ENCODE measurements at regions of chr9 and their contacts with region 1.

Region 1: GRCh38 chr9:87324613-87325194 is 173.0 kb upstream of the DAPK1 start:
- DNase-seq: no peak
- ATAC-seq: peak; percentile 70 to 79
- H3K4me3 ChIP-seq: no peak overlapping the region
- H3K27ac ChIP-seq: no peak overlapping the region
- H3K4me1 ChIP-seq: no peaks in the 10 kb centered on the region
- H3K27me3 ChIP-seq: no peaks in the 10 kb centered on the region
- CTCF ChIP-seq: peak; percentile 70 to 84 (median 78)
- POLR2A ChIP-seq: no peak

Region 2: DNA sequence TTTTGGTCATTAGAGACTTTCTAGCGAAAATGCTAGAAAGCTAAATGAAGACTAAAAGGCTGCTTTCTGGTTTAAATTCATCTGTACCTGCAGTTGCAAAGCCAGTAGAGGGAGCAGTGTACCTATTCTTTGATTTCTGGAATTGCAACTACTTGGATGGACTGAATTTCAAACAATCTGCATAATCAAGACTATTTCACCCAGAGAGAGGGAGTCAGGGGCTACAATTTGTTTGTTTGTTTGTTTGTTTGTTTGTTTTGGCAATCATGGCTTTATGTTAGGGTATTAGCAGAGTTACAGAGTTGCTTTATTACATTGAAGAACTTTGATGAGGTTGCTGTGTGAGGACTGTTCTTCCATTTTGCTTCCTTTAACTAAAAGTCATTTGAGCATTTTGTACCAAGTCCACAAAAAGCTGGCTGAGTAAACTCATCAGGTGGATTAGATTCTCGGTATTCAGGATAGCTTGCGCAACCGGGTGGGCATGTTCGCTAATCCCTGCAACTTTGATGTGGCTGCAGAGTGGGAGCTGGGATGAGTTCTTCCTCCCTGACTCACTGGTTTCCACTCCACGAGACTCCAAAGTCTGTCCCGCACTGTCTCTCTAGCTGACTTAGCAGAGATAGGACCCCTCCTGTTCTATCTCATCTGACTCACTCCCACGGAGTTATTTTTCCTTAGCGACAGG is 890.5 kb before region 1 on chr9:
- in situ Hi-C with region 1: loop called in 1 of 4 experiments (anchors 5 kb)
- intact Hi-C with region 1: loop called (anchors 2 kb)
- DNase-seq: peak; percentile 32 to 43
- ATAC-seq: peak; percentile 64 to 69
- H3K4me3 ChIP-seq: no peak overlapping the region
- H3K27ac ChIP-seq: peak overlapping the region in 2 of 4 donors; percentile 28 to 34
- H3K4me1 ChIP-seq: no peaks in the 10 kb centered on the region
- H3K27me3 ChIP-seq: no peaks in the 10 kb centered on the region
- CTCF ChIP-seq: peak; percentile 19 to 67 (median 56)
- POLR2A ChIP-seq: no peak

Region 3: DNA sequence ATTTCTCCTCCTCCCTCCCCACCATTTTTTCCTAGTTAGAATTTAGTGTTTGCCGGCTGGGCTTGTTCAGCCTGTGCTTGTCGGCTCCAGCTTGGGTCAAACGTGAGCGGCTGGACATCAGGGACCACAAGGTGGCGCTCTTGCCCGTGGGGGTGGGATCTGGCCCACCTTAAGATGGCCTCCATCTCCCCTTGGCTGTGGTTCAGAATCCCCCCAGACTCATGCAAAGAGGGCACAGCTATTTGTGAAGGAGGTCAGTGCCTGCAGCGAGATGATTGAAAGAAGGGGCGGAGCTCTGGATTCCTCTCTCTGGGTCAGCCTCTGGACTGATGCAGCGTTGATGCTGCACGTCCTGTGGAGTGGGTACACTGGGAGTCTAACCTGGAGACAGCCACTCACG is 687.2 kb before region 1 on chr9:
- in situ Hi-C with region 1: loop called in 1 of 4 experiments (anchors 25 kb)
- intact Hi-C with region 1: no loop called
- DNase-seq: no peak
- ATAC-seq: no peak
- H3K4me3 ChIP-seq: no peak overlapping the region
- H3K27ac ChIP-seq: no peak overlapping the region
- H3K4me1 ChIP-seq: no peaks in the 10 kb centered on the region
- H3K27me3 ChIP-seq: no peaks in the 10 kb centered on the region
- CTCF ChIP-seq: peak in 1 of 5 experiments; percentile 25
- POLR2A ChIP-seq: no peak

Region 4: GRCh38 chr9:86968258-86968920 is 356.3 kb before region 1 on chr9:
- in situ Hi-C with region 1: loop called in 1 of 4 experiments (anchors 25 kb)
- intact Hi-C with region 1: no loop called
- DNase-seq: no peak
- ATAC-seq: no peak
- H3K4me3 ChIP-seq: no peak overlapping the region
- H3K27ac ChIP-seq: no peak overlapping the region
- H3K4me1 ChIP-seq: no peaks in the 10 kb centered on the region
- H3K27me3 ChIP-seq: no peaks in the 10 kb centered on the region
- CTCF ChIP-seq: no peak
- POLR2A ChIP-seq: no peak

Region 5: GRCh38 chr9:87107072-87107471 is 217.6 kb before region 1 on chr9:
- in situ Hi-C with region 1: loop called in 1 of 4 experiments (anchors 10 kb)
- intact Hi-C with region 1: loop called (anchors 5 kb)
- DNase-seq: no peak
- ATAC-seq: peak; percentile 60 to 62
- H3K4me3 ChIP-seq: no peak overlapping the region
- H3K27ac ChIP-seq: no peak overlapping the region
- H3K4me1 ChIP-seq: peaks cover 3 to 26% of the 10 kb centered on the region in 2 donors
- H3K27me3 ChIP-seq: no peaks in the 10 kb centered on the region
- CTCF ChIP-seq: peak in 1 of 5 experiments; percentile 27
- POLR2A ChIP-seq: no peak

Measured in gastrocnemius medialis (tissue), 4 donors.